ENCODE measurements at regions of chr14 and their contacts with region 1.

Region 1: GRCh38 chr14:91872517-91873470 is 5.5 kb upstream of the TC2N start:
- DNase-seq: peak; percentile 62
- ATAC-seq: peak; percentile 6
- H3K4me3 ChIP-seq: peak overlapping the region in 3 of 5 experiments; percentile 10 to 49 (median 40)
- H3K4me3 Mint-ChIP-seq: peak overlapping the region; percentile 71
- H3K27ac ChIP-seq: peak overlapping the region; percentile 18 to 21
- H3K27ac Mint-ChIP-seq: peak overlapping the region; percentile 70
- H3K4me1 ChIP-seq: peaks cover 52 to 57% of the 10 kb centered on the region in 2 donors
- H3K4me1 Mint-ChIP-seq: peaks cover 56% of the 10 kb centered on the region
- H3K27me3 ChIP-seq: no peaks in the 10 kb centered on the region
- H3K27me3 Mint-ChIP-seq: no peaks in the 10 kb centered on the region
- CTCF ChIP-seq: no peak

Region 2: GRCh38 chr14:91817566-91818325 is 55.0 kb before region 1 on chr14:
- CTCF ChIA-PET with region 1: no interaction called
- POLR2A ChIA-PET with region 1: no interaction called
- intact Hi-C with region 1: loop called (anchors 1 kb)
- DNase-seq: peak; percentile 78
- ATAC-seq: peak; percentile 93
- H3K4me3 ChIP-seq: peak overlapping the region in 1 of 5 experiments; percentile 8
- H3K4me3 Mint-ChIP-seq: peak overlapping the region; percentile 33
- H3K27ac ChIP-seq: peak overlapping the region; percentile 12 to 64
- H3K27ac Mint-ChIP-seq: peak overlapping the region; percentile 5
- H3K4me1 ChIP-seq: peaks cover 11 to 19% of the 10 kb centered on the region in 2 donors
- H3K4me1 Mint-ChIP-seq: peaks cover 17% of the 10 kb centered on the region
- H3K27me3 ChIP-seq: no peaks in the 10 kb centered on the region
- H3K27me3 Mint-ChIP-seq: peaks cover 11% of the 10 kb centered on the region
- CTCF ChIP-seq: no peak

Region 3: GRCh38 chr14:91911474-91912032 is 38.8 kb after region 1 on chr14:
- CTCF ChIA-PET with region 1: no interaction called
- POLR2A ChIA-PET with region 1: interaction called, 5 read pairs
- intact Hi-C with region 1: loop called (anchors 5 kb)
- DNase-seq: peak; percentile 47
- ATAC-seq: peak; percentile 84
- H3K4me3 ChIP-seq: peak overlapping the region in 3 of 5 experiments; percentile 20 to 48 (median 25)
- H3K4me3 Mint-ChIP-seq: peak overlapping the region; percentile 66
- H3K27ac ChIP-seq: peak overlapping the region in 1 of 2 donors; percentile 76
- H3K27ac Mint-ChIP-seq: peak overlapping the region; percentile 82
- H3K4me1 ChIP-seq: peaks cover 12 to 14% of the 10 kb centered on the region in 2 donors
- H3K4me1 Mint-ChIP-seq: peaks cover 16% of the 10 kb centered on the region
- H3K27me3 ChIP-seq: peaks cover 0 to 6% (median 0%) of the 10 kb centered on the region in 4 experiments
- H3K27me3 Mint-ChIP-seq: peaks cover 20% of the 10 kb centered on the region
- CTCF ChIP-seq: no peak

Measured in B cell (primary cell).